ENCODE measurements at regions of chr22 and their contacts with region 1.

Region 1: DNA sequence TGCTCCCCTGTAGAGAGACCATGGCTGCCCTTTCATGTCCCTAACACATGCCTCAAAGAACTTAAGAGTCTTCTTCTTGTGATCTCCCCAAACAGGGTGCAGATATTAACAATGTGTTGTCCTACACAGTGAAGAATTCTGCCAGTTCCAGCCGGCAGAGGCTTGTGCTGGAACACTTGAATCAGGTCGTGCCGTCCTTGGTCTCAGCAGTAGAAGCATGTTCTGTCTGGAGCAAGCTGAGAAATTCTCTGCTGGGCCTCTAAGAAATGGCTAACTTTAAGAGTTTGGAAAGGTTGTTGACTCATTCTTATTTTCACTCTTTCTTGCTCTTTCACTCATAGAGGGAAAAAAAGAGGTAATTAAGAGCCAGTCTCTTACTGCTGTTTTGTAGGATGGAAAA is 71.1 kb upstream of the SLC25A18 start:
- DNase-seq: no peak
- ATAC-seq: no peak
- H3K4me3 ChIP-seq: no peak overlapping the region
- H3K27ac ChIP-seq: no peak overlapping the region
- H3K4me1 ChIP-seq: no peaks in the 10 kb centered on the region
- H3K27me3 ChIP-seq: no peaks in the 10 kb centered on the region
- CTCF ChIP-seq: no peak

Region 2: DNA sequence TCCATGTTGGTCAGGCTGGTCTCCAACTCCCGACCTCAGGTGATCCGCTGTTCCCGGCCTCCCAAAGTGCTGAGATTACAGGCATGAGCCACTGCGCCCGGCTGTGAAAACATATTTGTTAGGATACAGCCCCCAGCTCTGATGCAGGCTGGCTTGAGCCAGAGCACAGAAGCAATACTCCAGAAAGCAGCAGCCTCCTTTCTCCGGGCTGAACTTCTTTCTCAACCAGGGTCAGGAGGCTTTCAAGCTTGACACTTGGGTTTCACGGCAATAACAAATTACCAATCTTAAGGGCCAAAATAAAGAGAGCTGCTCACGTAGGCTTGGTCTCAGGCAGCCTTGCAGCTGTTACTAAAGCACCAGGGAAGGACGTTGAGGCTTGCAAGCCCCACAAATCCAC is 133.8 kb before region 1 on chr22:
- CTCF ChIA-PET with region 1: no interaction called
- POLR2A ChIA-PET with region 1: no interaction called
- in situ Hi-C with region 1: no loop called
- intact Hi-C with region 1: no loop called
- DNase-seq: no peak
- ATAC-seq: no peak
- H3K4me3 ChIP-seq: no peak overlapping the region
- H3K27ac ChIP-seq: no peak overlapping the region
- H3K4me1 ChIP-seq: no peaks in the 10 kb centered on the region
- H3K27me3 ChIP-seq: no peaks in the 10 kb centered on the region
- CTCF ChIP-seq: no peak

Region 3: GRCh38 chr22:17368554-17369438 is 123.5 kb before region 1 on chr22:
- CTCF ChIA-PET with region 1: no interaction called
- POLR2A ChIA-PET with region 1: interaction called, 13 read pairs
- in situ Hi-C with region 1: no loop called
- intact Hi-C with region 1: no loop called
- DNase-seq: no peak
- ATAC-seq: peak; percentile 73
- H3K4me3 ChIP-seq: peak overlapping the region; percentile 50 to 59
- H3K27ac ChIP-seq: peak overlapping the region; percentile 29; the same call in 1 of the 2 replicates
- H3K4me1 ChIP-seq: no peaks in the 10 kb centered on the region; the same call in 1 of the 2 replicates
- H3K27me3 ChIP-seq: no peaks in the 10 kb centered on the region
- CTCF ChIP-seq: no peak

Region 4: GRCh38 chr22:18070556-18071306 is 578.5 kb after region 1 on chr22:
- CTCF ChIA-PET with region 1: no interaction called
- POLR2A ChIA-PET with region 1: no interaction called
- in situ Hi-C with region 1: no loop called
- intact Hi-C with region 1: no loop called
- DNase-seq: no peak
- ATAC-seq: no peak
- H3K4me3 ChIP-seq: no peak overlapping the region
- H3K27ac ChIP-seq: no peak overlapping the region
- H3K4me1 ChIP-seq: no peaks in the 10 kb centered on the region
- H3K27me3 ChIP-seq: no peaks in the 10 kb centered on the region
- CTCF ChIP-seq: peak; percentile 47; the same call in 1 of the 2 replicates